Activated CD4-positive, alpha-beta T cell treated with anti-CD3 and anti-CD28 coated beads, Interleukin-2, amount 10 ng/mL, durations not matched to agents 24 days and 14 days (primary cell): ENCODE measurements at regions of chrX and their contacts with region 1.

Region 1: DNA sequence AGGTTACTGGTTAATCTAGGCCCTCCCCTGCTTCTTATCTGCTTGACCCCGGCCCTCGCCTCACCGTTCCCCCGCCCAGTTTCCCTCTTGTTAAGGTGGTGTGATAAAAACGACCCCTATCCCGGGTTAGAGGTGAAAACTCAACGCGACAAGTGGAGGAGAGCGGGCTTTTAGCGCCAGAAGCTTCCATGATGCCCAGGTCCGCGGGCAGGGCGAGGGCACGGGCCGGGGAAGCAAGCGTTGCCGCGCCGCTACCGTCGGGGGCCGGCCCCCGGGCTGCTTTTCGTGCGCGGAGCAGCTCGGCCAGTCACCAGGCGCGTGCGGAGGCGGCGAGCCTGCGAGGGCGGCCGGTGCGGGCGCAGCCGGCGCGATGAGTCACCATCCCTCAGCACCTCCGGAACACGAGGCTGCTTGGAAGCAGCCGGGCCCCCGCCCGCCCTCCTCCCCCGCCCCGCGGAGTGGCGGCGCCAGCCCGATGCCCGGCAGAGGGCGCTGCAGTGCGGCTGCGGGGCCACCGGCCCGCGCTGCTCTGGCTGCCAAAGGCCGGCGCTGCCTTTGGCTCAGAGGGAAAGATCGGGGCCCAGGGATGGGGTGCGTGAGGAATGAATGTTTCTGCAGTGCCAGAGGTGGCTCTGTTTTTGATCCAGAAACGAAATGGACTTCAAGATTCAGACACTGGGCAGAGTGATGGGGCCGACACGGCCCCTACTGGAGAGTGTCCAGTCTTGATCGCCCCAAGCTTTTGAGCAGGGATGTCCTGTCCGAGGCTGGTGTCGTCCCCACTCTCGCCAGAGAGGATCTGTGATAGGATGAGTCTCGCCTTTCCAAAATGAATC is 107.8 kb downstream of the NHSL2 start:
- DNase-seq: peak; percentile 93
- H3K4me3 Mint-ChIP-seq: peak overlapping the region; percentile 37
- H3K27ac Mint-ChIP-seq: no peak overlapping the region
- H3K4me1 Mint-ChIP-seq: peaks cover 8% of the 10 kb centered on the region
- H3K27me3 Mint-ChIP-seq: peaks cover 39% of the 10 kb centered on the region

Region 2: DNA sequence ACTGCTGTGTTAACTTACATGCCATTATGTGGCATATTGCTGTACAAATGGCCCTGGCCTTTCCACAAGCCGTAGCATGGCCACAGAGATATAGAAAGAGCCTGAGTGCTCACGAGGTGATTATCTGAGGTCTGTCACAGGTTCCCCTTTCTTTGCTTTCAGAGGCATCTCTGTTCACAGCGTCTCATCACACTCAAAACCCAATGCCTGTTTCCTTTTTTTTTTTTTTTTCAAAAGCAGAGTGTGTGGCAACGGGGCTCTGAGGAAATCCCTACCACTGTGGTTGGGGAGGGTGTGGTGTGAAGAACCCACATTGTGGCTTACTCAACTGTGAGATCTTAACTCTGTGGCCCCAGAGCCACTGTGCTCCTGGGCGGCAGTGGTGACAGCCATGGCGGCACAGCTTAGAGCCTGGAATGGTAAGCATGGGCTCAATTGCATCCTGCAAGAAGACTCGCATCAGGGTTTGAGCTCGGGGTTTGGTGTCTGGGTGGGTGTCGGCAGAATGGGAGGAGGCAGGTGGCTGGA is 82.4 kb after region 1 on chrX:
- intact Hi-C with region 1: loop called (anchors 1 kb)
- DNase-seq: peak; percentile 92
- H3K4me3 Mint-ChIP-seq: peak overlapping the region; percentile 53
- H3K27ac Mint-ChIP-seq: peak overlapping the region; percentile 69
- H3K4me1 Mint-ChIP-seq: peaks cover 32% of the 10 kb centered on the region
- H3K27me3 Mint-ChIP-seq: peaks cover 45% of the 10 kb centered on the region

Region 3: DNA sequence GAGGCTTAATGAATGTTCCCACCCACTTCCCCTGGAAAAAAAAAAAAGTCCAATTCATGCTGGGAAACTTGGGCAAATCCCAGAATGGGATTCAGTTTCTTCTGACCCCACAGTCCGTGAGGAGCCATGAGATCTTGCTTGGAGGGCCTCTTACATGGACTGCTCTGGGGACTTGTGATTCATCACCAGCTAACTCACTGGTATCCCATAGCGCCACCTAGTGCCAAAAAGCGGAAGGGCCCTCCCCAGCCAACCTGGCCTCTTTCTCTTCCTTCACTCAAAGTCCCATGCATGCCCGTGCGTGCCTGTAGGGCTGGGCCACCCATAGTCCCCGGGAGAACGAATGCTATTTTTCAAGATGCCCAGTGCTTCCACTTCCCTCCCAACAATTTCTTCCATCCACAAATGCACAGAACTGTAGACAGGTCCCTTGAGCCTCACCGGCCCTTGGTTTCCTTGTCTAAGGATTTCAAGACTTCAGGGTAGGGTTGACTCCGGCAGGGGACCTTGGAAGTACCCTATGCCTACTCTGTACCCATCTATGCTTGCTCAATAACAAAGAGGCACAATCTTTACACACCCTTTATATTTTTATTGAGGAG is 108.1 kb after region 1 on chrX:
- intact Hi-C with region 1: loop called (anchors 1 kb)
- DNase-seq: peak; percentile 94
- H3K4me3 Mint-ChIP-seq: no peak overlapping the region
- H3K27ac Mint-ChIP-seq: no peak overlapping the region
- H3K4me1 Mint-ChIP-seq: peaks cover 18% of the 10 kb centered on the region
- H3K27me3 Mint-ChIP-seq: peaks cover 55% of the 10 kb centered on the region

Region 4: DNA sequence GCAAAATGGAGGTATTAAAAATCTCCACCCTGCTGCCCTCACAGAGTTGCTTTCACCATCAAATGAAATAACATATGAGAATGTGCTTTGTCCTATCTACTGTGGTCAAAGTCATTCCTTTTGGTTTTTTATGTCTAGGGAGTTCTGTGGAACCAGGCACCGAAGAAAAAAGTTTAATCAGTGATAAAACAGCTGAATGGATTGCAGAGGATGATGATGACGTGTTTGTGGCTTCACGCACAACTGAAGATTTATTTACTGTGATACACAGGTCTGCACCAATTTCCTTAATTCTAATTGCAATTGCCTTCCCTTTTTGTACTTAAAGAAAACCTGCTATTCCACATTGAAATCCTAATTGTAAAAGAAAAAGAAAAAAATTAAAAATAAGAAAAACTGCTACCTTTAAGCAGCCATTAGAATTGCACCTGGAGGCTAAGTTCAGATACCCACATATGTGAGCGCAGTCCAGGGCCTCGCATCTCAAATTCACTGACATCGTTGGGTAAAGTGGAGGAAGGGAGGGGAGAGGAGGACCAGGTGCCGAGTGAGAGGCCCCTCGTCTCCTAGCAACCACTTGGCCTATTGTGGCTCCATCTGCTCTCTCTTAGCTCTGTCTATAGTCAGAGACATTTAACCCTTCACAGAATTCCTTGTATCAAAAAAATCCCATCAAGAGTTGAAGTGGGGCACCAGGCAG is 123.7 kb after region 1 on chrX:
- intact Hi-C with region 1: loop called (anchors 5 kb)
- DNase-seq: no peak
- H3K4me3 Mint-ChIP-seq: peak overlapping the region; percentile 50
- H3K27ac Mint-ChIP-seq: no peak overlapping the region
- H3K4me1 Mint-ChIP-seq: peaks cover 19% of the 10 kb centered on the region
- H3K27me3 Mint-ChIP-seq: peaks cover 29% of the 10 kb centered on the region